G401 (cell line): ENCODE measurements at regions of chr1 and their contacts with region 1.

Region 1: GRCh38 chr1:26959722-26960615 is at the start of gene KDF1:
- DNase-seq: peak; percentile 37
- total RNA-seq, gene KDF1: not detected in 2 replicates

Region 2: GRCh38 chr1:26799479-26800142 is 160.4 kb before region 1 on chr1:
- in situ Hi-C with region 1: no loop called
- DNase-seq: peak; percentile 98

Region 3: GRCh38 chr1:27071049-27071416 is 111.1 kb after region 1 on chr1:
- in situ Hi-C with region 1: loop called (anchors 25 kb)
- DNase-seq: peak; percentile 98

Region 4: GRCh38 chr1:27136998-27137542 is 177.1 kb after region 1 on chr1:
- in situ Hi-C with region 1: no loop called
- DNase-seq: peak; percentile 71

Region 5: GRCh38 chr1:27292106-27292505 is 332.1 kb after region 1 on chr1:
- in situ Hi-C with region 1: no loop called
- DNase-seq: no peak